GM12878 (cell line): ENCODE measurements at regions of chrX and their contacts with region 1.

Region 1: GRCh38 chrX:46642145-46642544 is 68.6 kb downstream of the CHST7 start:
- DNase-seq: no peak
- ATAC-seq: peak; percentile 69
- H3K4me3 ChIP-seq: no peak overlapping the region
- H3K27ac ChIP-seq: no peak overlapping the region
- H3K4me1 ChIP-seq: peaks cover 9% of the 10 kb centered on the region
- H3K27me3 ChIP-seq: no peaks in the 10 kb centered on the region
- CTCF ChIP-seq: peak; percentile 24 to 50 (median 39); a peak in 5 of 6 replicates
- EP300 ChIP-seq: no peak
- POLR2A ChIP-seq: no peak
- RAD21 ChIP-seq: peak; percentile 52; the same call in 1 of the 2 replicates

Region 2: GRCh38 chrX:46381630-46382029 is 260.5 kb before region 1 on chrX:
- CTCF ChIA-PET with region 1: interaction called, 8 read pairs
- POLR2A ChIA-PET with region 1: no interaction called
- RAD21 ChIA-PET with region 1: no interaction called
- SMC1A ChIA-PET with region 1: interaction called, 5 read pairs
- in situ Hi-C with region 1: no loop called
- intact Hi-C with region 1: loop called (anchors 2 kb)
- DNase-seq: peak; percentile 4
- ATAC-seq: peak; percentile 85
- H3K4me3 ChIP-seq: no peak overlapping the region
- H3K27ac ChIP-seq: no peak overlapping the region
- H3K4me1 ChIP-seq: no peaks in the 10 kb centered on the region
- H3K27me3 ChIP-seq: no peaks in the 10 kb centered on the region
- CTCF ChIP-seq: peak; percentile 60 to 71 (median 65)
- EP300 ChIP-seq: no peak
- POLR2A ChIP-seq: no peak
- RAD21 ChIP-seq: peak; percentile 64

Region 3: DNA sequence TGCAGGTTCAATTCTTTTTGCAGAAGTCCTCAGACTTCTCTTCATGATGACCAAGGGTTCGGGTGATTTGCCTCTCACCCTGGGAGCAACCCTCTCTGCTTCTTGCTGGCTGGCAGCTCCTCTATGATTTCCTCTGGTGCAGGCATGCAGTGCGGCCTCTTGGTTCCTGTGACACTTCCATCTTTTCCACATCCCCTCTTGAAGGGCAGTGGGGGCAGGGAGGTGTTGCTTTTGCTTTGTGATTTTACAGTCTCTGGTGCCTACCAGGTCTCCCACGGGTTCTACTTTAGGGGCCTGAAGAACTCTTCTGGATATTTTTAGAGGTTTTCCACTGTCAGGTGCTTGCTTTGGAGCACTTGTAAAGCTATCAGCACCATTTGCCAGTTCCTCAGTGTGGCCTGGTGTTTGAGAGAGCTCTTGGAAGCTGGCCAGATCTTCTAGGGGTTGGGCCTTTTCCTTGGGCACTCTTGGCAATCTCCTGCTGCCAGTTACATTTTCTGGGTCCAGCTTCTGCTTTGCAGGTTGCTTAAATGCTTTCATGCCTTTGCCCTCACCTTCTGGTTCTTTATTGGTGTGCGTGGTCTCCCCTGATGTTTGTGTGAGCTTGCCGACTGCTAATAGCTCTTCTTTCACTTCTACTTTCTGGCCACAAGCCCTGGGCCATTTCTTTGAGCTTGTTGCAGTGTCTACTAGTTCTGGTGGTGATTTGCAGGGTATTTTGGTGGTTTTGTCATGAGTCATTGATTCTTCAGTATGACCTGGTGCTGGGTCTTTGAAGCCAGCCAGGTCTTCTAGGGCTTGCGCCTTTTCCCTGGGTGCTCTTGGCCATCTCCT is 80.1 kb before region 1 on chrX:
- CTCF ChIA-PET with region 1: interaction called, 11 read pairs
- POLR2A ChIA-PET with region 1: interaction called, 5 read pairs
- RAD21 ChIA-PET with region 1: interaction called, 12 read pairs
- SMC1A ChIA-PET with region 1: interaction called, 9 read pairs
- in situ Hi-C with region 1: no loop called
- intact Hi-C with region 1: no loop called
- DNase-seq: peak; percentile 95
- ATAC-seq: peak; percentile 99
- H3K4me3 ChIP-seq: peak overlapping the region; percentile 4; the same call in 1 of the 2 replicates
- H3K27ac ChIP-seq: peak overlapping the region; percentile 62
- H3K4me1 ChIP-seq: peaks cover 20% of the 10 kb centered on the region
- H3K27me3 ChIP-seq: no peaks in the 10 kb centered on the region
- CTCF ChIP-seq: no peak
- EP300 ChIP-seq: peak; percentile 70 to 94
- POLR2A ChIP-seq: no peak
- RAD21 ChIP-seq: 0 out of 2 replicates have a peak, but pooled peaks have one; percentile 6

Region 4: DNA sequence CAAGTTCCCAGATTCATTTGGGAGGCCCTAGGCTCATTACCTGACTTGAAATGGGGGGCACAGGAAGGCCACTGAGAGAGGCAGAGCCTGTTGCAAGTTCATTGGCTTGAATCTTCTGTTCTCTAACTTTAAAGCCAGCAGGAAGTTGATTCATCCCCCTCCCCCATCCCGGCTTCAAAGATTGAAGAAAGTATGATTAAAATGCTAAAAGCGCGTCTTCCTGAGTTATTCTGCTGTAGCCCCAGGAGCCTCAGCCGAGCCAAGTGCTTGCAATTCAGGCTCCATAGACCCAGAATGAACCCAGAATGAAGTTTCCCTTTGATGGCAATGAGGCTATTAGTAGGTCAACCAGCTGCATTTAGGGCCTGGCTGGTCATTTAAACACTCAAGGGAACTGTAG is 53.9 kb before region 1 on chrX:
- CTCF ChIA-PET with region 1: interaction called, 3 read pairs
- POLR2A ChIA-PET with region 1: interaction called, 8 read pairs
- RAD21 ChIA-PET with region 1: interaction called, 7 read pairs
- SMC1A ChIA-PET with region 1: interaction called, 11 read pairs
- in situ Hi-C with region 1: no loop called
- intact Hi-C with region 1: no loop called
- DNase-seq: no peak
- ATAC-seq: peak; percentile 22; the same call in 1 of the 3 replicates
- H3K4me3 ChIP-seq: no peak overlapping the region
- H3K27ac ChIP-seq: peak overlapping the region; percentile 41
- H3K4me1 ChIP-seq: peaks cover 21% of the 10 kb centered on the region
- H3K27me3 ChIP-seq: no peaks in the 10 kb centered on the region
- CTCF ChIP-seq: no peak
- EP300 ChIP-seq: no peak
- POLR2A ChIP-seq: no peak
- RAD21 ChIP-seq: no peak

Region 5: GRCh38 chrX:46653482-46653881 is 11.3 kb after region 1 on chrX:
- CTCF ChIA-PET with region 1: interaction called, 8 read pairs
- POLR2A ChIA-PET with region 1: interaction called, 3 read pairs
- RAD21 ChIA-PET with region 1: interaction called, 10 read pairs
- SMC1A ChIA-PET with region 1: interaction called, 7 read pairs
- in situ Hi-C with region 1: no loop called
- intact Hi-C with region 1: no loop called
- DNase-seq: no peak
- ATAC-seq: peak; percentile 67
- H3K4me3 ChIP-seq: no peak overlapping the region
- H3K27ac ChIP-seq: peak overlapping the region; percentile 62
- H3K4me1 ChIP-seq: peaks cover 16% of the 10 kb centered on the region
- H3K27me3 ChIP-seq: no peaks in the 10 kb centered on the region
- CTCF ChIP-seq: peak; percentile 46 to 52 (median 48); a peak in 5 of 6 replicates
- EP300 ChIP-seq: no peak
- POLR2A ChIP-seq: no peak
- RAD21 ChIP-seq: peak; percentile 55

Region 6: GRCh38 chrX:46713672-46714490 is 71.7 kb after region 1 on chrX:
- CTCF ChIA-PET with region 1: interaction called, 3 read pairs
- POLR2A ChIA-PET with region 1: no interaction called
- RAD21 ChIA-PET with region 1: interaction called, 4 read pairs
- SMC1A ChIA-PET with region 1: interaction called, 5 read pairs
- in situ Hi-C with region 1: loop called (anchors 5 kb)
- intact Hi-C with region 1: no loop called
- DNase-seq: peak; percentile 82
- ATAC-seq: peak; percentile 70
- H3K4me3 ChIP-seq: peak overlapping the region; percentile 33
- H3K27ac ChIP-seq: peak overlapping the region; percentile 89
- H3K4me1 ChIP-seq: peaks cover 60% of the 10 kb centered on the region
- H3K27me3 ChIP-seq: no peaks in the 10 kb centered on the region
- CTCF ChIP-seq: no peak
- EP300 ChIP-seq: peak; percentile 98 to 99
- POLR2A ChIP-seq: no peak
- RAD21 ChIP-seq: no peak